ENCODE measurements at regions of chr3 and their contacts with region 1.

Region 1: DNA sequence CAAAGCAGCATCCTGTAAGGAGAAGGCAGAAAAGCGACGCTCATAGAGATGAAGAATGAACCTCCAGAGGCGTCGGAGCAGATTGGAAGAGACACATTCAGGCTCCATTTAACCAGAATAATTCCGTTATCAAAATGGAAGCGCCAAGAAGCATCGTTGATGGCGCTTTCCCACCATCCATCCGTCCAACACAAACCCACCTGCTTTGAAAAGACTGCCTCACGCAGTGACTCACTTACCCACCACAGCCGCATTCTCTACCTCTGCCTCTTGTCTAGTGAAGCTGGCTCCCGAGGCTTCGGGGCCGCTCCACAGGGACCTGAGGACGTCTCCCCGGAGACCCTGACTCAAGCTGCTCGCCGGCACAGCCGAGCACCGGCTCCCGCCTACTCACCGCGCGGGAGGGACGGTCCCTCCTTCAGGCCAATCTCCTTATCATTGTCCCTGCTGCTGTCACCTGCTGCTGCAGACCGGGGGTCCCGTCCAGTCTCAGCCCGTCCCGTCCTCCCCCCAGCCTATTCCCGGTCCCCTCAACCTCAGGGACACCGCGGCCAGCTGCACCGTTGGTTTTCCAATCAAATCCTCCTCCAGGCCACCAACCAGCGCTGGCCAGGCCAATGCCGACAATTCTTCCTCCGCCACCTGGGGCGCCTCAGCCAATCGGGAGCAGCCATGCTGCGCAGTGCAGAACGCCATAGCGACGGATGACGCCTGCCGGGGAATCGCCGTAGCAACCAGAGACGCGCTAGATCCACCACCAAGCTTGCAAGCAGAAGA is at the start of gene NEK10:
- DNase-seq: peak; percentile 83 to 88 (median 88)
- H3K4me3 ChIP-seq: peak within 1 kb of the TSS; percentile 34 to 84 (median 60)
- H3K4me3 Mint-ChIP-seq: peak within 1 kb of the TSS; percentile 85 to 95
- H3K27ac ChIP-seq: no peak within 1 kb of the TSS
- H3K27ac Mint-ChIP-seq: peak within 1 kb of the TSS in 4 of 7 donors; percentile 3 to 66 (median 14)
- H3K4me1 ChIP-seq: peaks cover 8 to 14% of the 10 kb centered on the region in 2 donors
- H3K4me1 Mint-ChIP-seq: peaks cover 14% of the 10 kb centered on the region
- H3K27me3 ChIP-seq: peaks cover 0 to 5% of the 10 kb centered on the region in 2 donors
- H3K27me3 Mint-ChIP-seq: peaks cover 7 to 15% (median 10%) of the 10 kb centered on the region in 3 donors
- CTCF ChIP-seq: no peak
- polyA plus RNA-seq, gene NEK10: not detected

Region 2: DNA sequence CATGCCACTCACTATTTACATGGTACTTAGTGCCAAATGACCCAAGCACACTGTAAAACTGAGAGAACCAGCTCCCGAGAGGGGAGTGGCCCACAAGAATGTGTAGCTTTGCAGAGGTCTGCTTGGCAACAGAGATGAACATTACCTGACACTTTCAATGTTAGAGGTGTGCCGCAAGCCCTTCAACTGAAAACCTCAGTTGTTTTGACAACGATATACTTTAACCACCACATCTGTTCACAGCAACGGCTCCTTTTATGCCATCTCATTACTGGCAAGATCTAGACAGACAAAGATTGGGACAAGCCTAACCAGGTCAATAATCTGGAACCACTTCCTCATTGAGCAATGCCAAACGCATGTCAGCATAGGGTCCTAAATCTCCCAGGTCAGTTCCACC is 23.5 kb before region 1 on chr3:
- intact Hi-C with region 1: no loop called
- DNase-seq: no peak
- H3K4me3 ChIP-seq: no peak overlapping the region
- H3K4me3 Mint-ChIP-seq: no peak overlapping the region
- H3K27ac ChIP-seq: no peak overlapping the region
- H3K27ac Mint-ChIP-seq: no peak overlapping the region
- H3K4me1 ChIP-seq: no peaks in the 10 kb centered on the region
- H3K4me1 Mint-ChIP-seq: peaks cover 6% of the 10 kb centered on the region
- H3K27me3 ChIP-seq: no peaks in the 10 kb centered on the region
- H3K27me3 Mint-ChIP-seq: no peaks in the 10 kb centered on the region
- CTCF ChIP-seq: no peak

Region 3: DNA sequence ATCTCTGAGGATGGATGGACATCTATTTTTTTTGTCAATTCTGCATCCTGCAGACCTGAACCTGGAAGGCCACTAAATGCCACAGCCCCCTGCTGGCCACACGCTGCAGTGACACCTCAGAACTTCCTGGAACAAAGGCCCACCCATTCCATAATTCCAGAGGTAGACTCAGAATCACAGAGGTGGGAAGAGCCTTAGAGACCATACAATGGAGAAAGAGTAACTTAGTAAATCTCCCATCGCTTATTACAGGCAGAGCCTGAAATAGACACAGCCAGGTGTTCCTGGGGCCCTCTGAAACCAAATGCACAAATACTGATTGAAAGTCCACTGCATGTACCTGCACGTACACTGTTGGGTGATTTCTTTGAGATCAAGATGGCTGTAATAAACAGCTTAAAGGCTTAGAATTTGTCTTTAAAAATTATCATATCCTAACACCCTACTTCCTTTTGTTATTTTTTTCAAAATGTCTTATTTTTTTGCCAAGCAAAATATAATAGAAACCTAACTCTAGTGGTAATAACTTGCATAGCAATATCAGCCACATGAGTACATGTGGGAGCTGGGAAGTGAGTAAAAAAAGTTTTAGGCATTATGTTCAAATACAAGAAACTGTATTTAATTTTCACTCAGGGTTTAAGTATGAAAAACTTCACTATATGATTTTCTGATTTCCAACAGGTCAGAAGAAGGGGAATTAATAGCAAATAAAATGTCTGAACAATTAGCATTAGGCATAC is 290.4 kb after region 1 on chr3:
- intact Hi-C with region 1: loop called (anchors 10 kb)
- DNase-seq: peak; percentile 25 to 60 (median 52)
- H3K4me3 ChIP-seq: no peak overlapping the region
- H3K4me3 Mint-ChIP-seq: no peak overlapping the region
- H3K27ac ChIP-seq: no peak overlapping the region
- H3K27ac Mint-ChIP-seq: peak overlapping the region in 1 of 7 donors; percentile 69
- H3K4me1 ChIP-seq: no peaks in the 10 kb centered on the region
- H3K4me1 Mint-ChIP-seq: peaks cover 4% of the 10 kb centered on the region
- H3K27me3 ChIP-seq: no peaks in the 10 kb centered on the region
- H3K27me3 Mint-ChIP-seq: peaks cover 0 to 4% (median 0%) of the 10 kb centered on the region in 3 donors
- CTCF ChIP-seq: peak; percentile 99